Ascending aorta (tissue), 2 donors: ENCODE measurements at regions of chr14 and their contacts with region 1.

Region 1: GRCh38 chr14:101947906-101948665 is 16.3 kb upstream of the DYNC1H1 start:
- DNase-seq: peak; percentile 100
- H3K4me3 ChIP-seq: peak overlapping the region; percentile 71 to 96
- H3K27ac ChIP-seq: peak overlapping the region; percentile 90 to 93
- H3K4me1 ChIP-seq: peaks cover 7 to 10% of the 10 kb centered on the region in 2 donors
- H3K27me3 ChIP-seq: no peaks in the 10 kb centered on the region
- CTCF ChIP-seq: no peak

Region 2: DNA sequence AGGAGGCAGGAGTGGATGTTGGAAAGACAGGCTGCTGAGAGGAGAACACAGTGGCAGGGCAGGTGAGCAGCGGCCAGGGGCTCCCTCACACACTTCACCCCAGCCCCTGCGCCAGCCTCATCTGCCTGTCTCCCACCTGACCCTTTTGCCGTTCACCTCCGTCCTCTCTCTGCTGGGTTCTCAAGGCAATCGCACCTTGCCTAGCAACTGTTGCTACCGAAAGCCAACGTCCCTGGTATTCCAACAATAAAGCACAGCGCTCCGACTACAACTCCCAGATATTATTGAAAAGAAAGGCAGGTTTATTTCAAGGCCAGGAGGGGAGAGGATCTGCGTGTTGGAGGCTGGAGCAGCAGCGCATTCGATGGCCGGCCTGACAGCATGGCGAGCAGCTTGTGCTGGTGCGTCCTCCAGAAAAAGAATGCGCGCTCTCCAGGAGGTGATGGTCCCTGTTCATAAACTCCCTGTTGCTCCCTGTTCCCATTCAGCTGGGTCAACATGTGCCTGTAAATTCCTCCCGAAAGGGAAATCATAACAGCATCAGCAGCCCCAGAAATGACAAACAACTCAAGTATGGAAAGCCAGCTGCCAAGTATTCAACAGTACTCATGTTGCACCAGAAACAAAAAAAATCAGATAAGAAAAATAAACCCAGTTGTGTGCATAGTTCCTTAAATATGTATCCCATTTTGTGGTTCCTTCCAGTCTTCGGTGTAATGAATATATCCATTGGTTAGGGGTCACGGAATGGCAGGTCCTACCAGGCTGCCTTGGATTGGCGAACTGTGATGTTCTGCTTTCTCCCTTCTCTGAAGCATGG is 539.8 kb before region 1 on chr14:
- intact Hi-C with region 1: no loop called
- DNase-seq: no peak
- H3K4me3 ChIP-seq: no peak overlapping the region
- H3K27ac ChIP-seq: no peak overlapping the region
- H3K4me1 ChIP-seq: no peaks in the 10 kb centered on the region
- H3K27me3 ChIP-seq: no peaks in the 10 kb centered on the region
- CTCF ChIP-seq: no peak

Region 3: GRCh38 chr14:101809671-101810514 is 138.2 kb before region 1 on chr14:
- intact Hi-C with region 1: loop called (anchors 1 kb)
- DNase-seq: peak; percentile 72 to 94
- H3K4me3 ChIP-seq: peak overlapping the region; percentile 73 to 90
- H3K27ac ChIP-seq: peak overlapping the region; percentile 97 to 98
- H3K4me1 ChIP-seq: peaks cover 6 to 27% of the 10 kb centered on the region in 2 donors
- H3K27me3 ChIP-seq: no peaks in the 10 kb centered on the region
- CTCF ChIP-seq: no peak

Region 4: GRCh38 chr14:101927859-101928258 is 20.2 kb before region 1 on chr14:
- intact Hi-C with region 1: loop called (anchors 1 kb)
- DNase-seq: peak; percentile 53 to 95
- H3K4me3 ChIP-seq: peak overlapping the region in 1 of 2 donors; percentile 25
- H3K27ac ChIP-seq: peak overlapping the region; percentile 67 to 71
- H3K4me1 ChIP-seq: peaks cover 0 to 9% of the 10 kb centered on the region in 2 donors
- H3K27me3 ChIP-seq: no peaks in the 10 kb centered on the region
- CTCF ChIP-seq: no peak

Region 5: DNA sequence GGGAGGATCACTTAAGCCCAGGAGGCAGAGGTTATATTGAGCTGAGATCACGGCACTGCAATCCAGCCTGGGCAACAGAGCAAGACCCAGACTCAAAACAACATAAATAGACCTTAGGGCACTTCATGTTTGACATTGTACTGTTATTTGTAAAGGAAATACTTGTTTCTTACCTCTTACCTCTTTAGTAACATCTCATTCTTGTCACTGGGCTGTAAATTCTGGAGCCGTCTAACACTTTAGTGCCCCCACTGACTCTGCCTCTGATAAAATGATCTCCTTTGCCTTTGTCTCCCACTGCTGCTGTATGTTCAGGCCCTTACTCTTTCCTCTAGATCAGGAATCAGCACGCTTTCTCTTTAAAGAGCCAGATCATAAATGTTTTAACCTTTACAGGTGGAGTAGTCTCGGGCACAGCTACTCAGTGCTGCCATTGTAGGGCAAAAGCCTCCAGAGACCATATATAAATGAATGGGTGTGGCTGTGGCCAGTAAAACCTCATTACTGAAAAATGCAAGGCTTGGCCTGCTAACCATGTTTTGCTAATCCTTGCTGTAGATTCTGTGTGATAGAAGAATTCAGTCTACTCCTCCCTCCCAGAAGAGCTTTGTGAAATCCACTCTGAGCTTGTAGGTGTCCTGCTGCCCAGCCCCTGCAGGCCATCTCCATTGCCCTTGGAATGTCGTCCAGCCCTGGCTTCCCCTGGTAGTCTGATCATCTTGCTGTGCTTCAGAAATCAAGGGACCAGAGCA is 80.5 kb after region 1 on chr14:
- intact Hi-C with region 1: no loop called
- DNase-seq: no peak
- H3K4me3 ChIP-seq: no peak overlapping the region
- H3K27ac ChIP-seq: peak overlapping the region in 1 of 2 donors; percentile 2
- H3K4me1 ChIP-seq: no peaks in the 10 kb centered on the region
- H3K27me3 ChIP-seq: no peaks in the 10 kb centered on the region
- CTCF ChIP-seq: no peak

Region 6: DNA sequence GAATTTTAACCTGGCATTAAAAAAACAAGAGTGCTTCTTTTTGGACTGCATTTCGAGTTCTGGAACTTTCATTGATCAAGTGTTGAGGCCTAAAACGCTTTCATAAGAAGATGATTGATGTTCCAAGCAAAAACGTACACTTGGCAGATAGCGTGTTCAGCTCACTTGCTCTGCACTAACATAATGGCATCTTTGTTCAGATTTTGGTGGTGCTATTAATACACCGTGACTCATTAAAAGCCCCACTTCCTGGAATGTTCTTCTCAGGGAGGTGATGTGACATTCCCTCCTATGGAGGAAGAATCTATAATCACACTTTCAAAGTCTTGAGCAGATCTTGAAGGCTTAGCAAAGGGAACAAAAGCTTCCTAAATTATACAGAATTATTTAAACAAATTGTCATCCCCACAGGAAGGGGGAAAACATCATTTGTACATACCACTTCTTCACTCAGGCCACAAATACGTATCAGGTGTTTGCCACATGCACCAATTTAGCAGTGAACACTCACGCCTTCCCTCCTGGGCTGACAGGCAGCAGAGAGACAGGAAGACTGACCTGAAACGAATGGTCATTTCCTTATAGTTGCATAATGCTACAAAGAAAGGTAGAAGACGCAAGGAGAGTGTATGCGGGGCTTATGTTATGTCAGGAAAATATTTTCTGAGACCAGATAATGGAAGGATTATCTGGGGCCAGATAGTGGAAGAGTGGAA is 123.4 kb after region 1 on chr14:
- intact Hi-C with region 1: no loop called
- DNase-seq: no peak
- H3K4me3 ChIP-seq: no peak overlapping the region
- H3K27ac ChIP-seq: no peak overlapping the region
- H3K4me1 ChIP-seq: no peaks in the 10 kb centered on the region
- H3K27me3 ChIP-seq: no peaks in the 10 kb centered on the region
- CTCF ChIP-seq: no peak

Region 7: DNA sequence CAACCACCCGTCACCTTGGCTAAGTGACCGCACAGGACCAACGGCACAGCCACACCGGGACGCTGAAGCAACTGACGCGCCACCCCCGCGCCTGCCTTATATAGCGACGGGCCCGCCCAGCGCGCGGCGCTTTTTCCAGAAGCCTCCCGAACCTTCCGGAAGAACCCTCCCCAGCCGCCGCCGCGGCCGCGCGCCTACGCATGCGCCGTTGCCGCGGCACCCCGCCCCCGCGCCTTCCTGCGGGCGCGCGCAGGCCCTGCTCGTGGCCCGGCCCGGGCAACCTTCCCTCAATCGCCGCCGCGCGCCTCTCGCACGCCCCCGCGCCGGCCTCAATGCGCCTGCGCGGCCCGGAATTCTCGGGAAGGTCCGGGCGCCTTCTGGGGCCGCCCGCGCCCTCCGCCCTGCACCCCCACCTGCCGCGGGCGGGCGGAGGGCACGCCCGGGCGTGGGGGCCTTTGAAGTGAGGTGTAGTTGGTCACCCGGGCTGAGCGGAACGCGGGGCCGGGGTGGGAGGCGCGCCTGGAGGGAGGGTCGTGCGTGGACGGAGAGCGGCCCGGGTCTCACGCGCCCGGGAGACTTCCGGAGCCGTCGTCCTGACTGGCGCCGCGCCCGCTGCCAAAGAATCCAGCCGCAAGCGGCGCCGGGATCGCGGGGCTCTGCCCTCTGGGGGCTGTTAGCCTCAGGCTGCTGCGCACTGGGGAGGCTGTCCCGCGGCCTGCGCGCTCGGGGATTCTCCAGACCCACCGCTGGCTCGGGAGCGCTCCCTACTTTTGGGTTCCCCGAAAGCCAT is 139.1 kb after region 1 on chr14 and contains the start of gene HSP90AA1:
- intact Hi-C with region 1: loop called (anchors 5 kb)
- DNase-seq: peak; percentile 75 to 96
- H3K4me3 ChIP-seq: peak within 1 kb of the TSS; percentile 89 to 97
- H3K27ac ChIP-seq: peak within 1 kb of the TSS; percentile 98 to 100
- H3K4me1 ChIP-seq: peaks cover 13 to 37% of the 10 kb centered on the region in 2 donors
- H3K27me3 ChIP-seq: no peaks in the 10 kb centered on the region
- CTCF ChIP-seq: peak in 2 of 3 experiments; percentile 19 to 29
- total RNA-seq, gene HSP90AA1: 120 TPM